MCF 10A (cell line): ENCODE measurements at regions of chr12 and their contacts with region 1.

Region 1: GRCh38 chr12:51047655-51048540 is at the start of gene LETMD1:
- DNase-seq: peak; percentile 99
- H3K4me3 Mint-ChIP-seq: peak within 1 kb of the TSS; percentile 94
- H3K27ac Mint-ChIP-seq: peak within 1 kb of the TSS; percentile 93
- H3K4me1 Mint-ChIP-seq: peaks cover 7% of the 10 kb centered on the region
- H3K27me3 Mint-ChIP-seq: no peaks in the 10 kb centered on the region
- CTCF ChIP-seq: peak; percentile 90
- total RNA-seq, gene LETMD1: 60.5 and 65.8 TPM in 2 replicates

Region 2: GRCh38 chr12:50825372-50825838 is 222.5 kb before region 1 on chr12:
- CTCF ChIA-PET with region 1: no interaction called
- POLR2A ChIA-PET with region 1: no interaction called
- intact Hi-C with region 1: loop called (anchors 1 kb)
- DNase-seq: peak; percentile 73
- H3K4me3 Mint-ChIP-seq: no peak overlapping the region
- H3K27ac Mint-ChIP-seq: peak overlapping the region; percentile 11
- H3K4me1 Mint-ChIP-seq: peaks cover 18% of the 10 kb centered on the region
- H3K27me3 Mint-ChIP-seq: no peaks in the 10 kb centered on the region
- CTCF ChIP-seq: peak; percentile 25

Region 3: DNA sequence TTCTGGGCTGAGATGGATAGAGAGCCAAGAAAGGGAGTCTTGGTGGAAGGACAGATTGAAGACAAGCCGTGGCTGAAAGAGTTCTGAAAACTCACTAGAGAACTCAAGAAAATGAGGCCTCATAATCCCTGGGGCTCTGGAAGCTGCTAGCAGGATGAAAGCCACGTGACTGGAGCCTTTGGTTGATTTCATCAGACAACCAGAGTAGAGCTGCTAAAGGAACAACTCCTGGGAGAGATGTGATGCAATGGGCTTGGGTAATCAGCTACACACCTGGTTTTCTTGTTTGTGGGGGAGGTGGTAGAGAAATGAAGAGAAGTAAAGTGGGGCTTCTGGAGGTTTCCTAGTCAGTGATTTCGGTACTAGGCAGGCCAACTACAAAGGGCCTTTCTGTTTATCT is 22.1 kb after region 1 on chr12:
- CTCF ChIA-PET with region 1: no interaction called
- POLR2A ChIA-PET with region 1: interaction called, 17 read pairs
- intact Hi-C with region 1: no loop called
- DNase-seq: peak; percentile 97
- H3K4me3 Mint-ChIP-seq: peak overlapping the region; percentile 35
- H3K27ac Mint-ChIP-seq: peak overlapping the region; percentile 83
- H3K4me1 Mint-ChIP-seq: peaks cover 10% of the 10 kb centered on the region
- H3K27me3 Mint-ChIP-seq: no peaks in the 10 kb centered on the region
- CTCF ChIP-seq: no peak

Region 4: DNA sequence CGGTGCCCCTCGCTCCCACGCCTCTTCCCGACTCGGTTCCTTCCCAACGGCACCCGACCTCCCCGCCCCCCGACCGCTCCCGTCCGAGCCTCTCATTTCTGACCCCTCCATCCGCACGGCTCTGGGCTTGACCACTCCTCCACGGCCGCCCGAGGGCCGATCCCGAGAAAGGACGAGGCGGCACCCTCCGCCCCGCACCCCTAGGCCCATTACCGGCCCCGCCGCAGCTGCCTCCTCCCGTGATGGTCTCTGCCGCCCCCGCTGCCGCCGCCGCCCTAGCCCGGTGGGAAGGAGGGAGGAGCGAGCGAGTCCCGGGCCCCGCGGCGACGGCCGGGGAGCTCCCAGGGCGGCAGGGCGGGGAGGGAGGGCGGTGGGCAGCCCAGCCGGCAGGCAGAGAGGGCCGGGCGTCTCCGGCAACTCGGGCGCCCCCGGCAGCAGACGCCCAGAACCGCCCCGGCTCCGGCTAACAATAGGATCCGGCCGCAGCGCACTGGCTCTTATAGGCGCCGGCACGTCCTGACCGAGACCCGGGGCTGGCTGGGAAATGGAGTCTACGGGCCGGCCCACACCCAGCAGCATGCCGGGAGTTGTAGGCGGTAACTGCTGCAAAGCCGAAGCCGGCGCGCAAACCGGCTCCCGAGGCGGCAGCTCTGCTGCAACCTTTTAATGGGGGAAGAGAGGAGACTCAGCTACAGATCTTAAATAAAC is 35.4 kb after region 1 on chr12 and contains the start of gene CSRNP2:
- CTCF ChIA-PET with region 1: interaction called, 3 read pairs
- POLR2A ChIA-PET with region 1: interaction called, 36 read pairs
- intact Hi-C with region 1: loop called (anchors 2 kb)
- DNase-seq: peak; percentile 93
- H3K4me3 Mint-ChIP-seq: peak within 1 kb of the TSS; percentile 88
- H3K27ac Mint-ChIP-seq: peak within 1 kb of the TSS; percentile 46
- H3K4me1 Mint-ChIP-seq: peaks cover 13% of the 10 kb centered on the region
- H3K27me3 Mint-ChIP-seq: no peaks in the 10 kb centered on the region
- CTCF ChIP-seq: no peak
- total RNA-seq, gene CSRNP2: 41.4 and 46.3 TPM in 2 replicates

Region 5: GRCh38 chr12:51192284-51192671 is 144.4 kb after region 1 on chr12:
- CTCF ChIA-PET with region 1: no interaction called
- POLR2A ChIA-PET with region 1: no interaction called
- intact Hi-C with region 1: no loop called
- DNase-seq: no peak
- H3K4me3 Mint-ChIP-seq: no peak overlapping the region
- H3K27ac Mint-ChIP-seq: no peak overlapping the region
- H3K4me1 Mint-ChIP-seq: no peaks in the 10 kb centered on the region
- H3K27me3 Mint-ChIP-seq: no peaks in the 10 kb centered on the region
- CTCF ChIP-seq: no peak

Region 6: DNA sequence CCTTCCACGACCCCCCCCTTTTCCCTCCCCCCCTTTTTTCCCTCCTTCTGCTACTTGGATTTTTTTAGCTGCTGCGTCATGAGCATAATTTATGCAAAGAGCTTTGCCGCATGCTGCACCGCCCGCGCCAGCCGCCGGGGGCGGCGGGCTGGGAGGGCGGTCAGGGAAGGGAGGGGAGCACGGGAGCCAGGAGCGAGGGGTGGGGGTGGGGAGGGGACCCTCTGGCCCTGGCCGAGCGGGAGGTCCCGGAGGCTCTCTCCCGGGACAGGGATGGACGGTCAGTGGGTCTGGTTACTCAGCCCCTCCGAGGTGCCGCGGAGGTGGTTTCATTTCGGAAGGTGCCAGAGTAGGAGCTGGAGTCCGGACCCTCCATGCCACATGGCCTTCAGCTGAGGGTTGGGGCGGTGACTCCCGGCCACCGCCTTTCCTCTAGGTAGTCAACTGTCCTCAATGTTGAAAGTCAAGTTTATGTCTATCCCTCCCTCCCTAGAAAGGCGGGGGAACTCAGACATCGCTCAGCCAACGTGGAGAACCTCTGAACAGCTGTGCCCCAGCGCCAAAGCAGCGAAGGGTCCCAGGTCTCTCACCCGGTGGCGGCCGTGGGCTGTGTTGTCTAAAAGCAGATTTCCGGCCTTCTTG is 170.2 kb after region 1 on chr12 and contains the start of gene POU6F1:
- CTCF ChIA-PET with region 1: interaction called, 3 read pairs
- POLR2A ChIA-PET with region 1: interaction called, 3 read pairs
- intact Hi-C with region 1: loop called (anchors 5 kb)
- DNase-seq: peak; percentile 72
- H3K4me3 Mint-ChIP-seq: peak within 1 kb of the TSS; percentile 74
- H3K27ac Mint-ChIP-seq: peak within 1 kb of the TSS; percentile 85
- H3K4me1 Mint-ChIP-seq: peaks cover 6% of the 10 kb centered on the region
- H3K27me3 Mint-ChIP-seq: no peaks in the 10 kb centered on the region
- CTCF ChIP-seq: peak; percentile 65
- total RNA-seq, gene POU6F1: 3.0 and 3.8 TPM in 2 replicates

Region 7: DNA sequence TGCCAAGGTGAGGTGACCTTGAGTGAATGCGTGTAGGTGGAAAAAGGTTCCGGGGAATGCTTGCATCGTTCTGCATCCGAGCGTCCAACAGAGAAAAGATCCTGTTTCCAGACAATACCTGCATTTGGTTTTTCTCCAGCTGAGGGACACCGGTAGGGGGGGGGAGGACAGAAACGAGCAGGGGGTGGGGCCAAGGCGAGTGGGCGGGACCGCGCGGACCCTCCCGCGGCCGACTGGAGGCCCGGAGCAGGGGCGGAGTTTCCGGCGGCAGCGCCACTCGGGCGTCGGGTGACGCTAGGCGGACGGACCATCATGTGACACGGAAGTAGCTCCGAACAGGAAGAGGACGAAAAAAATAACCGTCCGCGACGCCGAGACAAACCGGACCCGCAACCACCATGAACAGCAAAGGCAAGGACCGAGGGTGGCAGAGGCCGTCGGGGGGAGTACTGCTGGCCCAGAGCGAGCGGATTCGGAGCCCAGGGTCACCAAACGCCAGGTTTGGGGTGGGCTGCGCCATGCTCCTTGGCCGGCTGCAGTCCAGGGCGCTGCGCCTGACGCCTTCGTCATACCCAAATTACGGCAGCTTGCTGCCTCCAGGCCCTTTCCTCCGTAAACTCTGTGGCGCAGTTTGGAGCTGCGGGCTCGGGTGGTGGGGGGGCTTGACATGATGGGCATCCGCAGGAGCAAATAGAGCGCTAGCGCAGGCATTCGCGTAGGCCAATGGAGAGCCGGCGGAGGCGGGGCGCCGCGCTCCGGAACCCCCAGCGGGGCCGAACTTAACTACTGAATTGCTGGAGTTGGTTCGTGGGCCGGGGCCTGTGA is 190.8 kb after region 1 on chr12 and contains the start of gene DAZAP2:
- CTCF ChIA-PET with region 1: interaction called, 3 read pairs
- POLR2A ChIA-PET with region 1: interaction called, 9 read pairs
- intact Hi-C with region 1: loop called (anchors 5 kb)
- DNase-seq: peak; percentile 92
- H3K4me3 Mint-ChIP-seq: peak within 1 kb of the TSS; percentile 96
- H3K27ac Mint-ChIP-seq: peak within 1 kb of the TSS; percentile 100
- H3K4me1 Mint-ChIP-seq: peaks cover 22% of the 10 kb centered on the region
- H3K27me3 Mint-ChIP-seq: no peaks in the 10 kb centered on the region
- CTCF ChIP-seq: no peak
- total RNA-seq, gene DAZAP2: 74.2 and 93.2 TPM in 2 replicates

Region 8: DNA sequence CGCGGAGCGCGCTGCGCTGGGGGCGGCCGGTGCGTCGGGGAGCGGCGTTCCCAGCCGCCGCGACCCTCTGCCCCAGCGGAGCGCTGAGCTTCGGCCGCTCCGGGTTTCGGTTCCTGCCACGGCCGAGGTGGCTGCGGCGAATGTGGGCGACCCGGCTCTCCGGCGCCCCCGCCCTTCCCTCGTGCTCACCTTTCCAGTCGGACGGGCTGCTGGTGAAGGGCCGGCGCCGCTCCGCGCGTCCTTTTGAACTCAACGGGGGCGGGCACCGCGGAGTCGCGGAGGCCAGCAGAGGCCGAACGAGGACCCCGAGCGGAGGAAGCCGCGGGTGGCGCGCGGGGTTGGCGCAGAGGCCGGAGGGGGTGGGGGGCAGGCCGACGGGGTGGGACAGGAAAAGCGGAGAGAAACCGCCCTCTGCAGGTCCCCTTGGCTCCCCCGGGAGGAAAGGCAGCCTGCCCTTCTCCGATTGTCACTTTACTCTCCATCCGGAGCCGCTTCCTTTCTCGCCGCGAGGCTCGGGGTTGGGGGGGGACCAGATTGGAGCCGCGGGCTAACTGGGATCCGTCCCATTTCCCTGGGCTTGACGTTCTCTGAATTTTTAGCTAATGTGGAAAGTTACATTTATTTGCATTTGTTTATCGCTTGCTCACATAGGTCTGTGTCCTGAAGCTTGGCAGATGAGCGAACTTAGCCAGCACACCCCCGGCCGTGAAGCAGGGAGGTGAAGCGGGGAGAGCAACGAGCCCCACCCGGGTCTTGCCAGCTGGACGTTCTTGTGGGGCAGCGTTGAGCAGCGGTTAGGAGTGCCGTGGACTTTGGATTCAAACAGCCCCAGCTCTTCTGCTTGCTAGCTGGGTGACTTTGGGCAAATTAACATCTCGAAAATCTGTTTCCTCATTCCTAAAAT is 222.4 kb after region 1 on chr12 and contains the start of gene SMAGP:
- CTCF ChIA-PET with region 1: no interaction called
- POLR2A ChIA-PET with region 1: no interaction called
- intact Hi-C with region 1: loop called (anchors 10 kb)
- DNase-seq: peak; percentile 44
- H3K4me3 Mint-ChIP-seq: peak within 1 kb of the TSS; percentile 87
- H3K27ac Mint-ChIP-seq: peak within 1 kb of the TSS; percentile 74
- H3K4me1 Mint-ChIP-seq: peaks cover 17% of the 10 kb centered on the region
- H3K27me3 Mint-ChIP-seq: no peaks in the 10 kb centered on the region
- CTCF ChIP-seq: no peak
- total RNA-seq, gene SMAGP: 17.4 and 19.0 TPM in 2 replicates

Region 9: DNA sequence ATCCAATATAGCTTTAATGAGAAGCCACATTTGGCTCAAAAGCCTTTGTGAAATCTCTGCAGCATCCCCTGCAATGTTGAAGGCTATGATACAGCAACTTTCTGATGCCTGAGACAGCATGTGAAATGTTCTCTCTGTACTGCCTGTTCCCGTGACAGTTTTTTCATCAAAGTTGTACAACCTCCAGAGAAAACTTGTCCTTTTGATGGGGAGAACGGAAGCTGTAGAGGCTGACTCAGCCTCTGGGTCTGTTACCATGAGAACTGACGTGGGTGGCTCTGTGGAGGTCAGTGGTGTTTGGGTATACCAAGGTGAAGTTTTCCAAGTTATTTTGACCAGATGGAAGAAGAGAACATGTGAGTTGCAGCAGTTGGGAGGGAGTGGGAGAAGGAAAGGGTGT is 393.7 kb after region 1 on chr12:
- CTCF ChIA-PET with region 1: no interaction called
- POLR2A ChIA-PET with region 1: no interaction called
- intact Hi-C with region 1: no loop called
- DNase-seq: peak; percentile 54
- H3K4me3 Mint-ChIP-seq: no peak overlapping the region
- H3K27ac Mint-ChIP-seq: no peak overlapping the region
- H3K4me1 Mint-ChIP-seq: peaks cover 11% of the 10 kb centered on the region
- H3K27me3 Mint-ChIP-seq: no peaks in the 10 kb centered on the region
- CTCF ChIP-seq: no peak